ENCODE measurements at regions of chr20 and their contacts with region 1.

Region 1: GRCh38 chr20:9359561-9360308 is 154.7 kb upstream of the LAMP5 start:
- DNase-seq: peak; percentile 53 to 83 (median 76)
- H3K4me3 ChIP-seq: no peak overlapping the region
- H3K27ac ChIP-seq: no peak overlapping the region
- H3K4me1 ChIP-seq: peaks cover 0 to 3% (median 0%) of the 10 kb centered on the region in 4 experiments
- H3K27me3 ChIP-seq: no peaks in the 10 kb centered on the region

Region 2: DNA sequence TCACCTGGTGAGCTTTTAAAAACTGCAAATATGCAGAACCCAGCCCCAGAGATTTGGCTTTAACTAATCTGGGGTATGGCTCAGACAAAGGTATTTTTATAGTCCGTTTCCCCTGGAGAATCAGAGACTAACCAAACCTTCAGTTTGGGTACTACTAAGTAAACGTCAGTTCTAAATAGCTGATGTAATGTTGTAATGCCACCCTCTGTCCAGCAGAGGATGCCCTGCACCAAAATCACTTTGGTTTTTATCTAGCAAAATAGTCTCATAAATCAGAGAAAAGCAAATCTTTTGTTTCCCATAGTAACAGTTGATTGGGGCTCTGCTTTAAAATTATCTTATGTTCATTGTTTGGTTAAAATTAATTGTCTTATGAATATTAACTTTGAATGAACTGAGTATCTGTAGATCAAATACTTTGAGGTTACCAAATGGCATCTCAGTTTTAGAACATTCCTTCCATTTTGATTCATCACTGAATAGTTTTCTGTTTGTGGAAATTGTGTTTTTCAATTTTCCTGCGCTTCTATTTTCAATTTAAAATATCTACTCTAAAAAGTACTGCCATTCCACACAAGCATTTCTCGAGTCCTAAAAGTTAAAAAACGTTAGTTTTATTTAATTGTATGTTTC is 569.2 kb before region 1 on chr20:
- CTCF ChIA-PET with region 1: interaction called, 25 read pairs
- POLR2A ChIA-PET with region 1: no interaction called
- DNase-seq: peak; percentile 44 to 70 (median 54)
- H3K4me3 ChIP-seq: no peak overlapping the region
- H3K27ac ChIP-seq: no peak overlapping the region
- H3K4me1 ChIP-seq: no peaks in the 10 kb centered on the region
- H3K27me3 ChIP-seq: no peaks in the 10 kb centered on the region

Region 3: DNA sequence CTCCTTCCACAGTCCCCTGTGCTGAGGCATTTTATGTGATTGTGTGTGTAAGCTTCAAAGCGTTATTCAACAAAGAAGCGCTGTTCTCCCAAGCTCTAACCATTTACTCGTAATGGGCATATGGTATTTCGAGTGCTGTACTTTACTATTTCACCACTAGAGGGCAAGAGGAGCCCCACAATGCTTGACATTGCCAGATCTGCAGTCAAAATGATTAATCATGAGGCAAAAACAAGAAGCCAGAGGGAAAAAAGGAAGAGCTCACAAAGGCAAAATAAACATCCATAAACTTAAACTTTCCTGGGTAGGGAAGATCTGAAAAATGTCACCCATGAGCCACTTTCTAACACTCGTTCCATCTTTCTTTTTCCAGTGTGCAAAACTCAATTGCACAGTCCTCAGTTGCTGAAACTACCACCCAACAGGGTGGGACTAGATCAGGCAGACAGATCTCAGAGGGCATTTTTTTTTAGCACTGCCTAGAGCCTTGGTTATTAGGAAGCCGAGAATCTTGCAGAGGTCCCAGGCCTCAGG is 505.9 kb before region 1 on chr20:
- CTCF ChIA-PET with region 1: interaction called, 15 read pairs
- POLR2A ChIA-PET with region 1: no interaction called
- DNase-seq: peak; percentile 72 to 83 (median 80)
- H3K4me3 ChIP-seq: peak overlapping the region in 1 of 7 experiments; percentile 1
- H3K27ac ChIP-seq: no peak overlapping the region
- H3K4me1 ChIP-seq: peaks cover 0 to 7% (median 2%) of the 10 kb centered on the region in 4 experiments
- H3K27me3 ChIP-seq: no peaks in the 10 kb centered on the region

Region 4: GRCh38 chr20:9427430-9428291 is 67.9 kb after region 1 on chr20:
- CTCF ChIA-PET with region 1: no interaction called
- POLR2A ChIA-PET with region 1: no interaction called
- DNase-seq: no peak
- H3K4me3 ChIP-seq: no peak overlapping the region
- H3K27ac ChIP-seq: no peak overlapping the region
- H3K4me1 ChIP-seq: no peaks in the 10 kb centered on the region
- H3K27me3 ChIP-seq: no peaks in the 10 kb centered on the region